ENCODE measurements at regions of chr9 and their contacts with region 1.

Region 1: DNA sequence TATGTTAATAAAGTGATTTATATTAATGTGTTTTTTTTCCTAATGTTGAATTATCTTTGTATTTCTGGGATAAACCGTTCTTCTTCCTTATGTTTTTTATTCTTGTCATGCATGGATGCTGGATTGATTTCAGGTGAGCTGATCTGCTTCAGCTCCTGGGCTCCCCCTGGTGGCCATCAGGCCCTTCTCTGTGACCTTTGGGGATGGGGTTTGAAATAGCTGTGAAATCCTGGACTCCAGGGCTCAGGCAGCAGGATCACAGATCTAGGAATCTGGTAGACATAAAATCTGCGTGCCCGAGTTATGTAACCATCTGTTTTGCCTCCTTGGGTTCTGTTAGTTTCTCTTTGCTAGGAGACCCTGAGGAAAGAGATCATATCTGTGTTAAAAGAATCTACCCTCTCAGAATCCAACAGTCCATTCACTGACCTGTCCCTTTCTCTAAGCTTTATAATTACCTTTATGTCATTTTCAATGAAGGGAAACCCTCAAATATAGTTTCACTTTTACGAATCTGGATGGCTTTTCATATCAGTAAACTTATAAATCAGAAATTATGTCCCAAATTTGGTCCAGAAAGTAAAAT is 12.2 kb upstream of the OR13J1 start:
- DNase-seq: peak; percentile 58 to 97 (median 87)

Region 2: DNA sequence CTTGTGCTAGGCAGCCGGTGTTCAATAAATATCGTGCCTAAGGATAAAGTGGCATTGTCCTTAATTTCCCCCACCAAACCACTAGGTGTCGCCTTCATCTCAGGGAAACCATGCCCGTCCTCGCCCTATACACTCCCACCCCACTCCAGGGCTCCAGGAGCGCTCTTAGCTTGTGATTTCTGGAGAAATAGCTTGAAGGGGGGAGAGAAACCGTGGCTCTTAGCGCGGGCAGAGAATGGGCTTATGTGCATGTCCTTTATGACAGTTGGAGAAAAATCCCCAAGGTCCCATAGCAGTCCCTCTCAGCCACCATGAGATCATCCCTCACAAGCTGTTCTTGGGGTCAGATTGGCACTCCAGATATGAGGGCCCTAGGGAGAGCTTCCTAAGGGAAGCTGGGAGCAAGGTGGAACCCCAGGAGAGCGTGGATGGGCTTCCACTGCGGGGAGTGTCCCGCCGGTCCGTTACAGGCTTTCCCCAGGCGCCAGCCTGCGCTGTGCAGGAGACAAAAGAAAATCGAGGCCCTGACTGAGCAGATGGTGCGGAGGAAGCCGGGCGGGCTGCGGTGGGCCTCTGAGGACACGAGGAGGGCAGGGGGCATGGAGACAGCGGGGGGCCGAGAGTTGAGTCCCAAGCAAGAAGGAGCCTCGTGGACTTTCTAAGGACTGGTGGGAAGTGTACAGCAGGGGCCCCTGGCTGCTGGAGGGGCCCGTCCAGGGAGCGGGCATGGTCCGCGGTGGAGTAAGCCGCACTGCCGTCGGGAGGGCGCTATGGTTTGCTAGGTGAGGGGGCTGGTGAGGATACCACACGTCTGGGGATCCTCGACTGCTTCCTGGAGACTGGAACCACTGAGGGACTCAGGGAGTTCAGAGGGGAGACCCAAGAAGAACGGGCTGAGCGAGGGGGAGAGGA is 91.7 kb before region 1 on chr9:
- intact Hi-C with region 1: loop called (anchors 2 kb)
- DNase-seq: peak in 7 of 10 donors; percentile 52 to 93 (median 72)

Region 3: GRCh38 chr9:35829084-35829763 is 53.1 kb before region 1 on chr9 and contains the start of gene TMEM8B:
- intact Hi-C with region 1: loop called (anchors 2 kb)
- DNase-seq: peak; percentile 91 to 99 (median 96)

Measured in posterior cingulate gyrus (tissue), 11 donors.